ENCODE measurements at regions of chr2 and their contacts with region 1.

Region 1: GRCh38 chr2:195498176-195498575 is 158.8 kb upstream of the SLC39A10 start:
- DNase-seq: peak; percentile 33
- ATAC-seq: peak; percentile 60
- H3K4me3 ChIP-seq: no peak overlapping the region
- H3K27ac ChIP-seq: no peak overlapping the region
- H3K4me1 ChIP-seq: no peaks in the 10 kb centered on the region
- H3K27me3 ChIP-seq: no peaks in the 10 kb centered on the region
- CTCF ChIP-seq: peak; percentile 26 to 56 (median 40); a peak in 5 of 6 replicates
- POLR2A ChIP-seq: no peak
- RAD21 ChIP-seq: peak; percentile 48

Region 2: GRCh38 chr2:194383404-194383803 is 1114.8 kb before region 1 on chr2:
- CTCF ChIA-PET with region 1: no interaction called
- POLR2A ChIA-PET with region 1: no interaction called
- RAD21 ChIA-PET with region 1: no interaction called
- intact Hi-C with region 1: no loop called
- DNase-seq: peak; percentile 12
- ATAC-seq: no peak
- H3K4me3 ChIP-seq: no peak overlapping the region
- H3K27ac ChIP-seq: no peak overlapping the region
- H3K4me1 ChIP-seq: no peaks in the 10 kb centered on the region
- H3K27me3 ChIP-seq: no peaks in the 10 kb centered on the region
- CTCF ChIP-seq: no peak
- POLR2A ChIP-seq: no peak
- RAD21 ChIP-seq: no peak

Region 3: GRCh38 chr2:195520671-195521155 is 22.5 kb after region 1 on chr2:
- CTCF ChIA-PET with region 1: no interaction called
- POLR2A ChIA-PET with region 1: no interaction called
- RAD21 ChIA-PET with region 1: no interaction called
- intact Hi-C with region 1: no loop called
- DNase-seq: no peak
- ATAC-seq: no peak
- H3K4me3 ChIP-seq: no peak overlapping the region
- H3K27ac ChIP-seq: no peak overlapping the region
- H3K4me1 ChIP-seq: no peaks in the 10 kb centered on the region
- H3K27me3 ChIP-seq: no peaks in the 10 kb centered on the region
- CTCF ChIP-seq: no peak
- POLR2A ChIP-seq: no peak
- RAD21 ChIP-seq: no peak

Region 4: DNA sequence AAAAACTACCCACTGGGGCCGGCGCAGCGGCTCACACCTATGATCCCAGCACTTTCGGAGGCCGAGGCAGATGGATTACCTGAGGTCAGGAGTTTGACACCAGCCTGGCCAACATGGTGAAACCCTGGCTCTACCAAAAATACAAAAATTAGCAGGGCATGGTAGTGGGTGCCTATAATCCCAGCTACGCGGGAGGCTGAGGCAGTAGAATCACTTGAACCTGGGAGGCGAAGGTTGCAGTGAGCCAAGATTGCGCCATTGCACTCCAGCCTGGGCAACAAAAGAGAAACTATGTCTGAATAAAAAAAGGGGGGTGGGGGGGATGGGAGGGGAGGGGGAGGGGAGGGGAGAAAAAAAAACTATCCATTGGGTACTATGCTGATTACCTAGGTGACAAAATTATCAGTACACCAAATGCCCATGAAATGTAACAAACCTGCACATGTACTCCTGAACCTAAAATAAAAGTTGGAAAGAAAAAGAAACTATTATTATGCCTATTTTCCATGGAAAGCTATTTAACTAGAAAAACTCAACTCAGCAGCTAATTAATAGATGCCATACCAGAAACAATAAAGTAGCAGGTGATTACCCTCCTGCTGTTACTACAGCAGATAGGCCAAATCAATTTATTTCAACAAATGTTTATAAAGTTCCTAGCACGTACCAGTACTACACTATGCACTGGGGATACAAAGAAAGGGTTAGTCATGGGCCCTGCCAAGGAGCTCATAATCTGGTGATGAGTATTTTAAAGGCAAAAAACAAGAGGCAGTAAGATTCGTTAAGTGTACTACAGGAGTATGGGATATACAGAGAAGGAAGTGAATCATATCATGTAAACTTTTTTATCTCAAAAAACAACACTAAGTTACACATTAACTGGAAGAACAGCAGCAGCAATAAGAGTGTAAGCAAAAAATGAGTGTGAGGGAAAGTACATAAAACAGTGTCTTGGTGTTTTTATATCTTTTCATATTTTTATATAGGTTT is 46.0 kb after region 1 on chr2:
- CTCF ChIA-PET with region 1: no interaction called
- POLR2A ChIA-PET with region 1: no interaction called
- RAD21 ChIA-PET with region 1: no interaction called
- intact Hi-C with region 1: no loop called
- DNase-seq: no peak
- ATAC-seq: 0 out of 2 replicates have a peak, but pooled peaks have one; percentile 30
- H3K4me3 ChIP-seq: no peak overlapping the region
- H3K27ac ChIP-seq: no peak overlapping the region
- H3K4me1 ChIP-seq: peaks cover 4 to 6% of the 10 kb centered on the region in 2 experiments; a peak in 3 of 4 replicates
- H3K27me3 ChIP-seq: no peaks in the 10 kb centered on the region
- CTCF ChIP-seq: no peak
- POLR2A ChIP-seq: no peak
- RAD21 ChIP-seq: no peak

Region 5: GRCh38 chr2:195945061-195945460 is 446.9 kb after region 1 on chr2:
- CTCF ChIA-PET with region 1: no interaction called
- POLR2A ChIA-PET with region 1: no interaction called
- RAD21 ChIA-PET with region 1: no interaction called
- intact Hi-C with region 1: loop called (anchors 2 kb)
- DNase-seq: no peak
- ATAC-seq: no peak
- H3K4me3 ChIP-seq: no peak overlapping the region
- H3K27ac ChIP-seq: no peak overlapping the region
- H3K4me1 ChIP-seq: no peaks in the 10 kb centered on the region
- H3K27me3 ChIP-seq: no peaks in the 10 kb centered on the region
- CTCF ChIP-seq: no peak
- POLR2A ChIP-seq: no peak
- RAD21 ChIP-seq: no peak

Measured in HCT116 (cell line).